Activated T-helper 1 cell treated with anti-CD3 and anti-CD28 coated beads, Interleukin-12 subunit alpha, Interleukin-12 subunit beta, Interleukin-2, Interleukin-4 antibody, amounts not matched to agents 30 ng/mL and 10 ng/mL and 1 ng/mL, durations not matched to agents 14 hours and 24 hours and 36 hours (primary cell): ENCODE measurements at regions of chr1 and their contacts with region 1.

Region 1: DNA sequence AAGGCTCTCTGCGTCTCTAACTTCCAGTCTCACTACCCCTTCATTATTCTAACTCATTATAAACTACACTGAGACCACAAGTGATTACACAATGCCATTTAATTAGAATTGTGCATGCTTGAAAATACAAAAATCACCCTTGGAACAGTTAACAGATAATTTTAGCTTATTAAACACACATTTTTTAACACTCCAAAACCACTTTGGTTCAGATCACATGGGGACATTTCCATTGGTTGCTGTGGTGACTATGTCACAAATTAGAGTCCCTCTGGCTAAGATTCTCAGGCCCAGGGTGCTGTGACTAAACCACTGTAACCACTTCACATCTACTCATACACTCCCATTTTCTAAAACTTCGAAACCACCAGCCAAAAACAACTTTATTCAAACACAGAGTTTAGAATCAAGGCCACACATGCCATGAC is 43.0 kb downstream of the JAK1 start:
- DNase-seq: no peak
- H3K4me3 Mint-ChIP-seq: peak overlapping the region; percentile 34
- H3K27ac Mint-ChIP-seq: peak overlapping the region; percentile 93
- H3K4me1 Mint-ChIP-seq: peaks cover 82% of the 10 kb centered on the region
- H3K27me3 Mint-ChIP-seq: no peaks in the 10 kb centered on the region

Region 2: DNA sequence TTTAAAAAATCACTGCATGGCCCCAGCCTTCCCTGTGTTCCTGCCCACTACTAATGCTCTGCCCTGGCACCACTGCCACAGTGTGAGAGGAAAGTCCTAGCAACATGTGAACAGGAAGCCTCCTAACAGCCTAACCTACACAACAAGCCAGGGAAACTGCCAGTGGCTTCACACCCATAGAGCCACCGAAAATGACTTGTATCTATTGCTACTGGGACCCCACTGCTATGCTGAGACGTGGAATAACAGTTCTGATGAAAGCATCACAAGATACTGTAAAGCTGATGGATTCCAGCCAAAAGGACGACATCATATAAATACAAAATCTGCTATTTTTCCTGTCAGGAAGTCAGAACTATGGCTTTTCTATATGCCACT is 31.9 kb before region 1 on chr1:
- intact Hi-C with region 1: loop called (anchors 1 kb)
- DNase-seq: no peak
- H3K4me3 Mint-ChIP-seq: no peak overlapping the region
- H3K27ac Mint-ChIP-seq: no peak overlapping the region
- H3K4me1 Mint-ChIP-seq: peaks cover 88% of the 10 kb centered on the region
- H3K27me3 Mint-ChIP-seq: no peaks in the 10 kb centered on the region

Region 3: DNA sequence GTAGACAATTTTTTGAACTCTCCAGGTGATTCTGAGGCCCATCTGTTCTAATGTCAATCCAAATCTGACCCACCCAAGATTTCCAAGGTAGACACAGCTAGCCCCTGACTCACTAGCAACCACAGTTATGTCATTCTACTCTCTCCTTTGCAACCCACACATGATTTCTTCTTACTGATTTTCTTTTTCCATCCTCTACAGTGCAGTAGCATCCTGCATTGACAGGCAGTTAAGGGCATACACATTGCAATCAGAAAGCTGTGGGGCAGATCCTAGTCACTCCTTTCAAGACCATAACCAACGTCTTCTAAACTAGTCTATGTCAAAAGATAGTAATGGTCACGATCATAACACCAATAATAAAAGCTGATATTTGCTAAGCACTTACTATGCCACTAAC is 11.1 kb before region 1 on chr1:
- intact Hi-C with region 1: loop called (anchors 1 kb)
- DNase-seq: no peak
- H3K4me3 Mint-ChIP-seq: no peak overlapping the region
- H3K27ac Mint-ChIP-seq: peak overlapping the region; percentile 20
- H3K4me1 Mint-ChIP-seq: peaks cover 61% of the 10 kb centered on the region
- H3K27me3 Mint-ChIP-seq: no peaks in the 10 kb centered on the region

Region 4: GRCh38 chr1:64966158-64966971 is 43.1 kb after region 1 on chr1 and contains the start of gene JAK1:
- intact Hi-C with region 1: loop called (anchors 1 kb)
- DNase-seq: peak; percentile 81
- H3K4me3 Mint-ChIP-seq: peak within 1 kb of the TSS; percentile 93
- H3K27ac Mint-ChIP-seq: peak within 1 kb of the TSS; percentile 88
- H3K4me1 Mint-ChIP-seq: peaks cover 55% of the 10 kb centered on the region
- H3K27me3 Mint-ChIP-seq: peaks cover 2% of the 10 kb centered on the region
- total RNA-seq, gene JAK1: 102 TPM in 2 replicates

Region 5: GRCh38 chr1:65067491-65068201 is 144.3 kb after region 1 on chr1:
- intact Hi-C with region 1: loop called (anchors 1 kb)
- DNase-seq: peak; percentile 25
- H3K4me3 Mint-ChIP-seq: peak overlapping the region; percentile 89
- H3K27ac Mint-ChIP-seq: peak overlapping the region; percentile 95
- H3K4me1 Mint-ChIP-seq: peaks cover 41% of the 10 kb centered on the region
- H3K27me3 Mint-ChIP-seq: no peaks in the 10 kb centered on the region

Region 6: DNA sequence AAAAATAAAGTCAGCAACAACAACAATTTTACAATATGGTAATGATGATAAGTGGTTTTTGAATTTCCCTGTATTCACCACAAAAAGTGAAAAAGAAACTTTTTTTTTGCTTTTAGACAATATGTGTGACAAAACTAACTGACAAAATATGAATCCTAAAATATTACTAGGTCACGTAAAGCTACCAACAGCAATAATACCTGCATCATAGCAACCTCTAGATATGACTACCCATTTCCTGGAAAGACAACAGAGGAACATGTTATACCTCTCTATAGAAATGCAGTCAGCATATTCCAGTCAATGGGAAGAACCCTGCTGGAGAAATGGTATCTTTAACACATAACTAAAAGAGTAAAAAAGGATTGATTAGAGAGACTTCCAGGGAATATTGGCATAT is 943.1 kb after region 1 on chr1:
- intact Hi-C with region 1: loop called (anchors 5 kb)
- DNase-seq: no peak
- H3K4me3 Mint-ChIP-seq: no peak overlapping the region
- H3K27ac Mint-ChIP-seq: peak overlapping the region; percentile 41
- H3K4me1 Mint-ChIP-seq: peaks cover 14% of the 10 kb centered on the region
- H3K27me3 Mint-ChIP-seq: no peaks in the 10 kb centered on the region